ENCODE measurements at regions of chr11 and their contacts with region 1.

Region 1: DNA sequence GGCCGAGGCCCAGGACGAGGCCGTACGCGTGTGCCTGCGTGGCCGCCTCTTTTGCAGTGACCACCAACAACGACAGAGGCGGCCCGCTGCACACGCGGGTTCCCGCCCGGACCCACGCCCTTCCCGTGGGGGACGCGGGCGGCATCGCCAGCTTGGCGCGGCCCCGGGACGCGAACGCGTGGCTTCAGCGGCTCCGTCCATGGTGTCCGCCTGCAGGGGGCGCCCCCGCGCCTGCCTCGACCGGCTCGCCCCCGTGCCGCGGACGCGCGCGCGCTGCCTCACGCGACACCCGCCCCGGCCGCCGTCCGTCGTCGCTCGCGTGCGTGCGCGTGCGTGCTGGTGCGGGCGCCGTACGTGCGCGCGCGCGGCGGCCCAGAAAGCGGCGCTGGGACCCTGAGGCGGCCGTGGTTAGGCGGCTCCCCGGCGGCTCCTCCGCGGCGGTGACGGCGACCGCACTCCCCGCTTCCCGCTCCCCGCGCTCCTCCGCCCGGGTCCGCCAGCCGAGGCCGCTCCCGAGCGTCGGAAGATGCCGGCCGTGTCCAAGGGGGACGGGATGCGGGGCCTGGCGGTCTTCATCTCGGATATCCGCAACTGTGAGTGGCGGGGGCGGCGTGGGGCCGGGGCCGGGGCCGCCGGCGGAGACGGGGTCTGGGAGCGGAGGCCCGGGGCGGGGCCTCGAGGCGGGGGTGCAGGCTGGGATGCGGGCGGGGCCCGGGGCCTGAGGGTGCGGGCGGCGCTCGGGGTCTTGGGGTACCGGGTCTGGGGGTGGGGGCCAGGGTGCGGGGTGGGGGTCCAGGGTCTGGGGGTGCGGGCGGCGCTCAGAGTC is at the start of gene AP2A2:
- DNase-seq: peak; percentile 95
- ATAC-seq: peak; percentile 84
- H3K4me3 ChIP-seq: peak within 1 kb of the TSS; percentile 19 to 70 (median 63)
- H3K4me3 Mint-ChIP-seq: peak within 1 kb of the TSS; percentile 85
- H3K27ac ChIP-seq: peak within 1 kb of the TSS; percentile 10 to 64
- H3K27ac Mint-ChIP-seq: peak within 1 kb of the TSS; percentile 46
- H3K4me1 ChIP-seq: peaks cover 13 to 22% of the 10 kb centered on the region in 2 donors
- H3K4me1 Mint-ChIP-seq: peaks cover 21% of the 10 kb centered on the region
- H3K27me3 ChIP-seq: no peaks in the 10 kb centered on the region
- H3K27me3 Mint-ChIP-seq: no peaks in the 10 kb centered on the region
- CTCF ChIP-seq: peak; percentile 71
- total RNA-seq, gene AP2A2: 53.1 and 54.5 TPM in 2 replicates

Region 2: GRCh38 chr11:809287-810039 is 116.2 kb before region 1 on chr11 and contains the start of gene RPLP2:
- CTCF ChIA-PET with region 1: interaction called, 3 read pairs
- POLR2A ChIA-PET with region 1: no interaction called
- intact Hi-C with region 1: loop called (anchors 5 kb)
- DNase-seq: peak; percentile 100
- ATAC-seq: peak; percentile 82
- H3K4me3 ChIP-seq: peak within 1 kb of the TSS; percentile 53 to 95 (median 86)
- H3K4me3 Mint-ChIP-seq: peak within 1 kb of the TSS; percentile 96
- H3K27ac ChIP-seq: peak within 1 kb of the TSS; percentile 83 to 94
- H3K27ac Mint-ChIP-seq: peak within 1 kb of the TSS; percentile 99
- H3K4me1 ChIP-seq: peaks cover 23 to 35% of the 10 kb centered on the region in 2 donors
- H3K4me1 Mint-ChIP-seq: peaks cover 42% of the 10 kb centered on the region
- H3K27me3 ChIP-seq: no peaks in the 10 kb centered on the region
- H3K27me3 Mint-ChIP-seq: no peaks in the 10 kb centered on the region
- CTCF ChIP-seq: no peak
- total RNA-seq, gene RPLP2: 3,814 and 3,947 TPM in 2 replicates

Region 3: DNA sequence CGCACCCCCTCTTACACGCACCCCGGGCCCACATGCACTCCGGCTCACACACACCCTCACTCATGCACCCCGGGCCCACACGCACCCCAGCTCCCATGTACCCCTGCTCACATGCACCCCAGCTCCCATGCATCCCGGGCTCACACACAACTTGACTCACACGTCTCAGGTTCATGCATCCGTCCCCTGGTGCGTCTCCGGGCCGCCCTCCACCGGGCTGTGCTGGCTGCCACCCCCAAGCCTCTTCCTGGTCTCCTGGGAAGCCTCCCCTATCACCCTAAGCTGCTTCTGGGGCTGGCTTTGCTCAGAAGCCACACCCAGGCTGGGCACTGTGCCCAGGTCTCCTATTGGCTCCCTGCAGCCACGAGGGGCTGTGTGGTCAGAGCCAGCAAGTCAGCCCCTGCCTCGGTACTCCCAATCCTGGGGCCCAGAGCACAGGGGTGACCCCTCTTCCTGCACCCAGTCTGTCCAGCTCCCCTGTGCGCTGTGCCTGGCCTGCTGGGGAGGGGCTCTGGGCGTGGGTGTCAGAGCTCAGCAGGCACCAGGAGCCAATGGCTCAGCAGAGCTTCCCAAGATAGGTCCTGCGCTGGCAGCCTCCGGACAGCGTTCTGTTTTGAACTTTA is 66.1 kb before region 1 on chr11:
- CTCF ChIA-PET with region 1: no interaction called
- POLR2A ChIA-PET with region 1: no interaction called
- intact Hi-C with region 1: no loop called
- DNase-seq: no peak
- ATAC-seq: no peak
- H3K4me3 ChIP-seq: no peak overlapping the region
- H3K4me3 Mint-ChIP-seq: no peak overlapping the region
- H3K27ac ChIP-seq: no peak overlapping the region
- H3K27ac Mint-ChIP-seq: no peak overlapping the region
- H3K4me1 ChIP-seq: no peaks in the 10 kb centered on the region
- H3K4me1 Mint-ChIP-seq: no peaks in the 10 kb centered on the region
- H3K27me3 ChIP-seq: no peaks in the 10 kb centered on the region
- H3K27me3 Mint-ChIP-seq: no peaks in the 10 kb centered on the region
- CTCF ChIP-seq: no peak

Region 4: DNA sequence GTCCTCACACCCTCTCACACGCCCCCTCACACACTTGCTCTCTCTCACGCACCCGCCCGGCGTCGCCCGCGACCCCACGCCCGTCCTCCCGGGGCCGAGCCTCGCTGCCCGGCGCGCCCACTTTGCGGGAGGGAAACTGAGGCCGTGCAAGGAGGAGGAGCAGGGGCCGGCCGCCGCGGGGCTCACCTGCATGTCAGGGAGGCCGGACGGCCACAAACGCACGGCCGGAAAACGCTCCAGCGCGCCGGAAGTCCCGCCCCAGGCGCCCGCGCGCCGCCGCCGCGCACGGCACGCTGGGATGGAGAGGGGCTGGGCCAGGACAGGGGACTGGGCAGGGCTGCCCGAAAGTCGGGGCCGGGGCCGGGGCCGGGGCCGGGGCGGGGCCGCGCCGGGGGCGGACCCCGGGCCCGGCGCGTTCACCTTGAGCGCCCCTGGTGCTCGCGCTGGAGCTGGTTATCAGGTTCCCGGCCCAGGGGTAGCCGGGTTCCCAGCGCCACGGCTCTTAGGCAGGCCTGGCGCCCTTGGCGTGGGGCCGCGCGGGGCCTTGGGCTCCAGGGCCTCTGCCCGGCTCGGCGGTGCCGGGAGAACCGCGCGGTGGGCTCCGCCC is 15.0 kb before region 1 on chr11 and contains the start of gene CHID1:
- CTCF ChIA-PET with region 1: interaction called, 4 read pairs
- POLR2A ChIA-PET with region 1: interaction called, 15 read pairs
- intact Hi-C with region 1: loop called (anchors 1 kb)
- DNase-seq: peak; percentile 87
- ATAC-seq: peak; percentile 96
- H3K4me3 ChIP-seq: peak within 1 kb of the TSS in 4 of 5 experiments; percentile 59 to 83 (median 79)
- H3K4me3 Mint-ChIP-seq: peak within 1 kb of the TSS; percentile 92
- H3K27ac ChIP-seq: peak within 1 kb of the TSS in 1 of 2 donors; percentile 74
- H3K27ac Mint-ChIP-seq: peak within 1 kb of the TSS; percentile 91
- H3K4me1 ChIP-seq: peaks cover 3 to 23% of the 10 kb centered on the region in 2 donors
- H3K4me1 Mint-ChIP-seq: peaks cover 25% of the 10 kb centered on the region
- H3K27me3 ChIP-seq: no peaks in the 10 kb centered on the region
- H3K27me3 Mint-ChIP-seq: no peaks in the 10 kb centered on the region
- CTCF ChIP-seq: no peak
- total RNA-seq, gene CHID1: 62.5 and 68.1 TPM in 2 replicates

Region 5: DNA sequence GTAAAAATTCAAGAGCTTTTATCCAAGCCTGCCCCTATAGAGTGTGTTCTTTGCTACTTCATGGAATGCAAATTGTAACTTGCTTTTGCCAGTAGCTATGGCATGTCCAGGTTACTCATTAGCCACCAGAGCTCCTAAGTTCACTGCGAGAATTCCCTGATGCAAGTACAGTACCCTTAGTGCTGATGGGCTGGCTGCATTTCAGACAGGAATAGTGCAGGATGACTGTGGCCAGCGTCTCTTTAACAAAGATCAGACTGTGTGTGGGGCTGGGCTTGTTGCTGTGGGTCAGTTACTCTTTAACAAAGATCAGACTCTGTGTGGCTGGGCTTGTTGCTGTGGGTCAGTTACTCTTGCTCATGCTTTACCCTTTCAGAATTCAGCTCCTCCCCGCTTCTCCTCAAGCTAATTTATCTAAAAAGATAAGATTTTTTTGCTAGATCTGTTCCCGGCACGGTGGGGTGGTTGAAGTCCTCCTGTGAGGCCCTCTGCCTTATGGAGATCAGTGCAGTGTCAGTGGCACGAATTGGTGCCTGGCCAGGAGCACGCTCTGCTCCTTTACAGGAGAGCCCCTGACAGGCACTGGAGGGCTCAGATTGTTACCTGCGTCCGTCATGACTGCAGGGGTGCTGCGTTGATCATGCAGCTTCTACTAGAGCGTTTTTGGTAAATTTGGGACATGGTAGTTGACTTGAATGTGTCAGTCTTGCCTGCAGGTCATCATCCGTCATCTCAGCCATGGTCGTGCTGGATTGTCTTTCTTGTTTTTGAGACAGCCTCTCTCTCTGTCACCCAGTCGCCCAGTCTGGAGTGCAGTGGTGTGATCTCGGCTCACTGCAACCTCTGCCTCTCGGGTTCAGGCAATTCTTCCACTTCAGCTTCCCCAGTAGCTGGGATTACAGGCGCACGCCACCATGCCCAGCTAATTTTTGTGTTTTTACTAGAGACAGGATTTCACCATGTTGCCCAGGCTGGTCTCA is 27.0 kb after region 1 on chr11:
- CTCF ChIA-PET with region 1: no interaction called
- POLR2A ChIA-PET with region 1: no interaction called
- intact Hi-C with region 1: no loop called
- DNase-seq: no peak
- ATAC-seq: no peak
- H3K4me3 ChIP-seq: no peak overlapping the region
- H3K4me3 Mint-ChIP-seq: no peak overlapping the region
- H3K27ac ChIP-seq: no peak overlapping the region
- H3K27ac Mint-ChIP-seq: no peak overlapping the region
- H3K4me1 ChIP-seq: peaks cover 18% of the 10 kb centered on the region in 2 donors
- H3K4me1 Mint-ChIP-seq: peaks cover 31% of the 10 kb centered on the region
- H3K27me3 ChIP-seq: no peaks in the 10 kb centered on the region
- H3K27me3 Mint-ChIP-seq: no peaks in the 10 kb centered on the region
- CTCF ChIP-seq: no peak

Region 6: GRCh38 chr11:1807264-1807995 is 881.7 kb after region 1 on chr11:
- CTCF ChIA-PET with region 1: no interaction called
- POLR2A ChIA-PET with region 1: no interaction called
- intact Hi-C with region 1: no loop called
- DNase-seq: no peak
- ATAC-seq: no peak
- H3K4me3 ChIP-seq: no peak overlapping the region
- H3K4me3 Mint-ChIP-seq: no peak overlapping the region
- H3K27ac ChIP-seq: no peak overlapping the region
- H3K27ac Mint-ChIP-seq: no peak overlapping the region
- H3K4me1 ChIP-seq: no peaks in the 10 kb centered on the region
- H3K4me1 Mint-ChIP-seq: no peaks in the 10 kb centered on the region
- H3K27me3 ChIP-seq: peaks cover 0 to 4% (median 0%) of the 10 kb centered on the region in 4 experiments
- H3K27me3 Mint-ChIP-seq: peaks cover 43% of the 10 kb centered on the region
- CTCF ChIP-seq: no peak